Calu3 (cell line): ENCODE measurements at regions of chr3 and their contacts with region 1.

Region 1: GRCh38 chr3:37907906-37908305 is 46.2 kb downstream of the CTDSPL start:
- DNase-seq: no peak
- H3K4me3 Mint-ChIP-seq: no peak overlapping the region
- H3K27ac Mint-ChIP-seq: no peak overlapping the region
- H3K4me1 Mint-ChIP-seq: peaks cover 64% of the 10 kb centered on the region
- H3K27me3 Mint-ChIP-seq: no peaks in the 10 kb centered on the region
- CTCF ChIP-seq: no peak

Region 2: GRCh38 chr3:37741644-37742043 is 166.3 kb before region 1 on chr3:
- CTCF ChIA-PET with region 1: no interaction called
- intact Hi-C with region 1: no loop called
- DNase-seq: peak; percentile 43
- H3K4me3 Mint-ChIP-seq: no peak overlapping the region
- H3K27ac Mint-ChIP-seq: no peak overlapping the region
- H3K4me1 Mint-ChIP-seq: no peaks in the 10 kb centered on the region
- H3K27me3 Mint-ChIP-seq: peaks cover 99% of the 10 kb centered on the region
- CTCF ChIP-seq: no peak

Region 3: GRCh38 chr3:37945807-37946530 is 38.1 kb after region 1 on chr3:
- CTCF ChIA-PET with region 1: interaction called, 5 read pairs
- intact Hi-C with region 1: loop called (anchors 2 kb)
- DNase-seq: peak; percentile 80
- H3K4me3 Mint-ChIP-seq: peak overlapping the region; percentile 49
- H3K27ac Mint-ChIP-seq: peak overlapping the region; percentile 63
- H3K4me1 Mint-ChIP-seq: peaks cover 64% of the 10 kb centered on the region
- H3K27me3 Mint-ChIP-seq: no peaks in the 10 kb centered on the region
- CTCF ChIP-seq: no peak

Region 4: GRCh38 chr3:38608086-38608720 is 700.3 kb after region 1 on chr3:
- CTCF ChIA-PET with region 1: no interaction called
- intact Hi-C with region 1: no loop called
- DNase-seq: no peak
- H3K4me3 Mint-ChIP-seq: no peak overlapping the region
- H3K27ac Mint-ChIP-seq: no peak overlapping the region
- H3K4me1 Mint-ChIP-seq: no peaks in the 10 kb centered on the region
- H3K27me3 Mint-ChIP-seq: peaks cover 61% of the 10 kb centered on the region
- CTCF ChIP-seq: no peak